ENCODE measurements at regions of chr18 and their contacts with region 1.

Region 1: GRCh38 chr18:10525371-10526210 is at the start of gene NAPG:
- DNase-seq: peak; percentile 91
- H3K4me3 Mint-ChIP-seq: peak within 1 kb of the TSS; percentile 97
- H3K27ac Mint-ChIP-seq: peak within 1 kb of the TSS; percentile 98
- H3K4me1 Mint-ChIP-seq: peaks cover 43% of the 10 kb centered on the region
- H3K27me3 Mint-ChIP-seq: peaks cover 12% of the 10 kb centered on the region
- total RNA-seq, gene NAPG: 35.2 and 35.3 TPM in 2 replicates

Region 2: GRCh38 chr18:8608795-8609658 is 1916.6 kb before region 1 on chr18 and contains the start of gene RAB12:
- intact Hi-C with region 1: loop called (anchors 5 kb)
- DNase-seq: peak; percentile 79
- H3K4me3 Mint-ChIP-seq: peak within 1 kb of the TSS; percentile 94
- H3K27ac Mint-ChIP-seq: peak within 1 kb of the TSS; percentile 85
- H3K4me1 Mint-ChIP-seq: peaks cover 50% of the 10 kb centered on the region
- H3K27me3 Mint-ChIP-seq: peaks cover 20% of the 10 kb centered on the region
- total RNA-seq, gene RAB12: 14.7 and 17.2 TPM in 2 replicates

Region 3: DNA sequence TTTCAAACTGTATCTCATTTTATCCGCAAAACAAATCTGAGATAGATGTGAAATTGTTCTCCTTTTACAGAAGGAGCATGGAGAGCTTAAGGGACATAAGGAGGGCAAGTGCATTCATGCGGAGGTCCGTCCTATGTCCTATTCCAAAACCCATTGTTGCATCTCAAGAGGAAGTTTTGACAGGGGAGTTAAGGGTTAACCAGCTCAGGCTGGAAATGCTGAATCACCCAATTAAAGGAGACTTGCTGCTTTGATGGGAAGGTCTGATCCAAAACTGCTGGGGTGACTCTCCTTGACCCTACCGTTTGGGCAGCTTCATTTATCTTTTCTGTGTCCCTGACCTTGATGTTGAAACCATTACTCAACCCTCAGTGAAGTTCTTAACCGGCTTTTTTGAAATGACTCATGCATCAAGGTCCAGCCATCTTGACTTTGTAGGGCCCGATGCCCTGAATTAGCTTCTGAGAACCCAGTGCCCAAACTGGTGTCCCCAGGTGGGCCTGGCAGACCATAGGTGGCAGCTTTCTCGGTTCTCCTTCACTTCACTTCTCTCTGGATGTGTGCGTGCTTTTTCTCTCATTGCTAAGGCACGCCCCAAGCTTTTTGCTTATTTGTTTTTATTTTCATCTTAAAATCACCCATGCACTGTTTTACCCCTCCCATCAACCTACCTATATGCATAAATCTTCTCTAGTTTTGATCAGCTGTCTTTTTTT is 655.7 kb before region 1 on chr18:
- intact Hi-C with region 1: loop called (anchors 10 kb)
- DNase-seq: no peak
- H3K4me3 Mint-ChIP-seq: no peak overlapping the region
- H3K27ac Mint-ChIP-seq: peak overlapping the region; percentile 53
- H3K4me1 Mint-ChIP-seq: peaks cover 35% of the 10 kb centered on the region
- H3K27me3 Mint-ChIP-seq: no peaks in the 10 kb centered on the region

Region 4: GRCh38 chr18:10391506-10391905 is 134.1 kb before region 1 on chr18:
- intact Hi-C with region 1: loop called (anchors 10 kb)
- DNase-seq: no peak
- H3K4me3 Mint-ChIP-seq: no peak overlapping the region
- H3K27ac Mint-ChIP-seq: peak overlapping the region; percentile 1
- H3K4me1 Mint-ChIP-seq: peaks cover 10% of the 10 kb centered on the region
- H3K27me3 Mint-ChIP-seq: peaks cover 24% of the 10 kb centered on the region

Region 5: DNA sequence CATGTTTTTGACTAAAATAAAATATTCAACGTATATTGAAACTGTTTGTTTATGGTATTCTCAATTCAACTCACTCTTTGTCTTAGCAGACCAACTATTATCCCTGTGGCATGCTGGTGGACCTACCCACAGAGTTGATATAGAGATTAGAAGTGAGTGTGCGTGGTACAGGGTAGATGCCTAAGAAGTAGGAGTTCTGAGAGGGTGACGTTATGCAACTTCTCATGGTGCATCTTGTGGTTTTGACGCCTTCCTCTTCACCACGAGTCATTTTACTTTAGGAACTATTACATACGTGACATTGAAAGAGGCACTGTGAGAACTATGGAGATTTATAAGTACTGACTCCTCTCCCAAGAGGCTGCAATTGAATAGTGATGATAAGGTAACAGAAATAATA is 26.4 kb before region 1 on chr18:
- intact Hi-C with region 1: loop called (anchors 1 kb)
- DNase-seq: no peak
- H3K4me3 Mint-ChIP-seq: no peak overlapping the region
- H3K27ac Mint-ChIP-seq: no peak overlapping the region
- H3K4me1 Mint-ChIP-seq: peaks cover 11% of the 10 kb centered on the region
- H3K27me3 Mint-ChIP-seq: peaks cover 45% of the 10 kb centered on the region

Measured in activated T-helper 2 cell treated with anti-CD3 and anti-CD28 coated beads, Interferon-gamma antibody, Interleukin-2, Interleukin-4, amounts not matched to agents 10 μg/mL and 5 μg/mL and 100 μg/mL, durations not matched to agents 14 hours and 24 hours and 36 hours (primary cell).